ENCODE measurements at regions of chr5 and their contacts with region 1.

Region 1: GRCh38 chr5:134101686-134102439 is 12.6 kb upstream of the TCF7 start:
- DNase-seq: peak in 1 of 2 experiments; percentile 97
- H3K4me3 ChIP-seq: no peak overlapping the region
- H3K27ac ChIP-seq: no peak overlapping the region
- H3K4me1 ChIP-seq: peaks cover 6 to 31% (median 23%) of the 10 kb centered on the region in 4 experiments
- H3K27me3 ChIP-seq: peaks cover 2 to 22% (median 16%) of the 10 kb centered on the region in 4 experiments; a peak in 6 of 7 replicates
- CTCF ChIP-seq: peak in 2 of 3 experiments; percentile 86 to 87; a peak in 3 of 4 replicates
- EP300 ChIP-seq: 0 out of 3 replicates have a peak, but pooled peaks of 1 of the 2 experiments have one; percentile 21
- POLR2A ChIP-seq: no peak
- RAD21 ChIP-seq: peak; percentile 64 to 72

Region 2: GRCh38 chr5:134026521-134027268 is 75.2 kb before region 1 on chr5:
- CTCF ChIA-PET with region 1: interaction called, 12 read pairs
- POLR2A ChIA-PET with region 1: interaction called, 5 read pairs
- DNase-seq: peak; percentile 66 to 67
- H3K4me3 ChIP-seq: no peak overlapping the region
- H3K27ac ChIP-seq: no peak overlapping the region
- H3K4me1 ChIP-seq: no peaks in the 10 kb centered on the region
- H3K27me3 ChIP-seq: no peaks in the 10 kb centered on the region
- CTCF ChIP-seq: peak; percentile 69 to 94 (median 90)
- EP300 ChIP-seq: no peak
- POLR2A ChIP-seq: no peak
- RAD21 ChIP-seq: peak; percentile 66 to 70

Region 3: DNA sequence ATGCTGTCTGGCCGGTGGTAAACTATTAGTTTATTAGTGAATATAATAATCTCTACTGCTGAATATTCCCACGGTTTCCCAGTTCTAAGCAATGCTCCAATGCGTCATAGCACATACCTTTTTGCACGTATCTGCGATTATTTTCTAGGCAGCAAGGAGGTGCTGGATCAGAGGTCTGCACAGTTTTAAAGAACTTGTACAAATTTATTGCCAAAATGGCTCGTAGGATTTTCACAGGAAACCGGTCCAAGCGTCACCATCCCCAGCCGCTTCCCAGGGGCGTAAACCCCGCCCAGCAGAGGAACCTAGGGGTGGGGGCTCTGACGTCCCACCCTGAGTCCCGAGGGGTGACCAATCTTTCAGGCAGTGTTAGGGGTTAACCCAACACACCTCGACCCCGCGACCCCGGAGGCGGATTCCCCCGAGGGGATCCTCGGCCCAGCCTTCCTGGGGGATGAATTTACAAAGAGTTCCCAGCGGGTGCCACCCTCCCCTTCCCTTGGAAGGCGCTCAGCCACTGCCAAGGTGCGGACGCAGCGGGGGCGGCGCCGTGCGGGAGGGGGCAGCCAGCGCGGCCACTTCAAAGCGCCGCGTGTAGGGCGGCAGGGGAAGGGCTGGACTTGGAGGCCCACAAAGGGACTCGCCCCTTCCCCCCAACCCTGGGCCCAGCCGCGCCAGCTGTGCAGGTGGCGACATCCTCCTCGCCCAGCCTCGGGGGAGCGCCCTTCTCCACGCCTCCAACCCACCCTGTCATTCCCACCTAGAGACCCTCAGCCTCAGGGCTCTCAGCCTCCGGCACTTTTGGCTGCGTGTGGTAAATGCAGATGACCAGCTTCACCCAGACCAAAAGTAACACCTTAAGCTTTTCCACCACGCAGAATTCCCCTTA is 30.9 kb before region 1 on chr5:
- CTCF ChIA-PET with region 1: interaction called, 14 read pairs
- POLR2A ChIA-PET with region 1: interaction called, 4 read pairs
- DNase-seq: peak in 1 of 2 experiments; percentile 75
- H3K4me3 ChIP-seq: peak overlapping the region; percentile 14 to 57 (median 46)
- H3K27ac ChIP-seq: no peak overlapping the region
- H3K4me1 ChIP-seq: peaks cover 0 to 7% (median 2%) of the 10 kb centered on the region in 4 experiments; a peak in 4 of 7 replicates
- H3K27me3 ChIP-seq: peaks cover 0 to 8% (median 3%) of the 10 kb centered on the region in 4 experiments; a peak in 4 of 7 replicates
- CTCF ChIP-seq: peak; percentile 24 to 47 (median 30); a peak in 3 of 4 replicates
- EP300 ChIP-seq: no peak
- POLR2A ChIP-seq: no peak
- RAD21 ChIP-seq: peak; percentile 40 to 49

Region 4: DNA sequence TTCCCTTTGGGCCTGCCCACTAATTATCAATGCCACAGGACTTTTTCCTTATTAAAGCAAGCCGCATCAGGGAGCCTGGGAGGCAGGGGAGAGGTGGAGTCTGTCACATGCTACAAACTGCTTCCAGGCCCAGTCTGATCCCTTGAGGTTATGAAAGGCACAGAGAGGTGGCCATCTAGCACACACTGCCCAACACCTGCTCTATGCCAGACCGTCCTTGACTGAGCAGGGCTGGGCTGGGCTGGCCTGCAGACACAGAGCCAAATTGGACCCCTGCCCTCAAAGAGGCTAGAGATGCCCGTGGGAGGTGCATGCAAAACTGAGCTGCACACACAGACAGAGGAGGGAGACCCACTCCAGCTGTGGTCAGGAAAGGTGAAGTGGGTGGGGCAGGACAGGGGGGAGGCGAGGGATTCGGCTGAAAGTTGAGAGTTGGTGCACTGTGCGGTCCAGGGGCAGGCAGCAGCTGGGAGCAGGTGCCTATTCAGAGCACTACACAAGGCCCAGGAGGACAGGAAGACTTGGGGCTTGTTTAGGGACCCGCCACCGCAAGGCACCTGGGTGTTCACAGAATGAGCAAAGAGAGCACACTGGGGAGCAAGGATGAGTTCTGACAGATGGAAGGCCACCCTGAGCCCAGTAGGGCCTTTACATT is 23.8 kb before region 1 on chr5:
- CTCF ChIA-PET with region 1: interaction called, 14 read pairs
- POLR2A ChIA-PET with region 1: interaction called, 4 read pairs
- DNase-seq: no peak
- H3K4me3 ChIP-seq: no peak overlapping the region
- H3K27ac ChIP-seq: no peak overlapping the region
- H3K4me1 ChIP-seq: no peaks in the 10 kb centered on the region
- H3K27me3 ChIP-seq: no peaks in the 10 kb centered on the region
- CTCF ChIP-seq: no peak
- EP300 ChIP-seq: no peak
- POLR2A ChIP-seq: no peak
- RAD21 ChIP-seq: no peak

Region 5: GRCh38 chr5:134113902-134114875 is 12.3 kb after region 1 on chr5 and contains the start of gene TCF7:
- CTCF ChIA-PET with region 1: interaction called, 84 read pairs
- POLR2A ChIA-PET with region 1: interaction called, 4 read pairs
- DNase-seq: peak; percentile 59 to 79
- H3K4me3 ChIP-seq: peak within 1 kb of the TSS; percentile 62 to 89 (median 77)
- H3K27ac ChIP-seq: no peak within 1 kb of the TSS
- H3K4me1 ChIP-seq: peaks cover 0 to 15% (median 9%) of the 10 kb centered on the region in 4 experiments; a peak in 6 of 7 replicates
- H3K27me3 ChIP-seq: peaks cover 20 to 35% (median 32%) of the 10 kb centered on the region in 4 experiments
- CTCF ChIP-seq: no peak
- EP300 ChIP-seq: no peak
- POLR2A ChIP-seq: peak in 1 of 2 experiments; percentile 79; a peak in 2 of 3 replicates
- RAD21 ChIP-seq: no peak
- total RNA-seq, gene TCF7: 6.8 and 8.5 TPM in 2 replicates

Region 6: GRCh38 chr5:134125039-134126015 is 23.5 kb after region 1 on chr5:
- CTCF ChIA-PET with region 1: interaction called, 20 read pairs
- POLR2A ChIA-PET with region 1: interaction called, 7 read pairs
- DNase-seq: no peak
- H3K4me3 ChIP-seq: no peak overlapping the region
- H3K27ac ChIP-seq: no peak overlapping the region
- H3K4me1 ChIP-seq: no peaks in the 10 kb centered on the region; a peak in 1 of 7 replicates
- H3K27me3 ChIP-seq: no peaks in the 10 kb centered on the region
- CTCF ChIP-seq: no peak
- EP300 ChIP-seq: no peak
- POLR2A ChIP-seq: no peak
- RAD21 ChIP-seq: no peak

Measured in H1 (cell line).